ENCODE measurements at regions of chr19 and their contacts with region 1.

Region 1: DNA sequence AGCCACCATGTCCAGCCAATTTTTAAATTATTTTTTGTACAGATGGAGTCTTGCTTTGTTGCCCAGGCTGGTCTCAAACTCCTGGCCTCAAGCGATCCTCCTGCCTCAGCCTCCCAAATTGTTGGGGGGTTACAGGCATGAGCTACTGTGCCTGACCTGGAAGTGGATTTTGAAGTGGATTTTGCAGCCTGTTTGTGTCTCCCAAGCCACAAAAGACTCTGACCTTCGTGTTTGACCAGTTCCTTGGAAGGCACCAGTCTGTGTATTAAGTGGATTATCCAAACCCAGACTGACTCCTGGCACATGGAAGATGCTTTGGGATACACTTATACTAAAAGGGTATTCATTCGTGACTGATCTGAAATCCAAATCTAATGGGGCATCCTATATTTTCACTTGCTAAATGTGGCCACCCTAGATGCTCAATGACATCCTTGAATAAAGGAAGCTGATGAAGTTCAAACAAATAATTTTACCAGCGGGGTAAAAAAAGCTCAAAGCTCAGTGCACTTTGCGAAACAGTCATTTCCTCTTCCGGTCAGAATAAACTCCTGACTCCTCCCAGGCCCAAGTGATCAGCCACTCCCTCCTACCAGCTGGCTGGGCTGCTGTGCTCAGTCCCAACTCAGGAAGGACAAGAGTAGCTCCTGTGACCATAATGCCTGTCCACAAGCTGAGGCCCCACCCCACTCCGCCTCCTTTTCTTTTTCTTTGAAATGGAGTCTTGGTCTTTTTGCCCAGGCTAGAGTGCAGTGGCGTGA is 32.6 kb upstream of the GATAD2A start:
- DNase-seq: peak; percentile 79
- ATAC-seq: peak; percentile 99
- H3K4me3 Mint-ChIP-seq: peak overlapping the region; percentile 23
- H3K27ac Mint-ChIP-seq: peak overlapping the region; percentile 94
- H3K4me1 Mint-ChIP-seq: peaks cover 11% of the 10 kb centered on the region
- H3K27me3 Mint-ChIP-seq: no peaks in the 10 kb centered on the region

Region 2: DNA sequence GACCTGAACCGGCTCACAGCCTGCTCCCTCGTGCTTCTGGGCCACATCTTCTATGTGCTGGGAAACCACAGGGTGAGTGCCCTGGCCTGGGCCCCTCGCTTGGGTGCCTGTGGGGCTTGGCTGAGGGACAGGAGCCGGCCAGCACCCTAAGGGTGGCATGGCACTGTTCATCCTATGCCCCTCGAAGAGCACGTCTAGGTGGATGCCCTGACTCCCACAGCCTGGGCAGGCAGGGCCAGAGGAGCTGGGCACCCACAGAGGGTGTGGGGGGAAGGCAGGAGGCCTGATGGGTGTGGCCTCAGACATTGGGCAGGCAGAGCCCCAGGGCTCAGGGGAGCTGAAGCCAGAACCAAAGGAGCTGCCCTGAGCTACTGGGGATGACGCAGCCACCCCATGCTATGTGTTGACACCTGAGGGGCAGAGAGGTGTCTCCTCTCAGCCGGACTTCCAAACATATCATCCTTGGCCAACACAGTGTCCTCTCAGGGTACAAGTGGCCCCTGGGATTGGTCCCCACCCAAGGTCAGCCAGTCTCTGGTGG is 23.4 kb before region 1 on chr19:
- CTCF ChIA-PET with region 1: no interaction called
- DNase-seq: no peak
- ATAC-seq: no peak
- H3K4me3 Mint-ChIP-seq: no peak overlapping the region
- H3K27ac Mint-ChIP-seq: no peak overlapping the region
- H3K4me1 Mint-ChIP-seq: no peaks in the 10 kb centered on the region
- H3K27me3 Mint-ChIP-seq: no peaks in the 10 kb centered on the region

Region 3: DNA sequence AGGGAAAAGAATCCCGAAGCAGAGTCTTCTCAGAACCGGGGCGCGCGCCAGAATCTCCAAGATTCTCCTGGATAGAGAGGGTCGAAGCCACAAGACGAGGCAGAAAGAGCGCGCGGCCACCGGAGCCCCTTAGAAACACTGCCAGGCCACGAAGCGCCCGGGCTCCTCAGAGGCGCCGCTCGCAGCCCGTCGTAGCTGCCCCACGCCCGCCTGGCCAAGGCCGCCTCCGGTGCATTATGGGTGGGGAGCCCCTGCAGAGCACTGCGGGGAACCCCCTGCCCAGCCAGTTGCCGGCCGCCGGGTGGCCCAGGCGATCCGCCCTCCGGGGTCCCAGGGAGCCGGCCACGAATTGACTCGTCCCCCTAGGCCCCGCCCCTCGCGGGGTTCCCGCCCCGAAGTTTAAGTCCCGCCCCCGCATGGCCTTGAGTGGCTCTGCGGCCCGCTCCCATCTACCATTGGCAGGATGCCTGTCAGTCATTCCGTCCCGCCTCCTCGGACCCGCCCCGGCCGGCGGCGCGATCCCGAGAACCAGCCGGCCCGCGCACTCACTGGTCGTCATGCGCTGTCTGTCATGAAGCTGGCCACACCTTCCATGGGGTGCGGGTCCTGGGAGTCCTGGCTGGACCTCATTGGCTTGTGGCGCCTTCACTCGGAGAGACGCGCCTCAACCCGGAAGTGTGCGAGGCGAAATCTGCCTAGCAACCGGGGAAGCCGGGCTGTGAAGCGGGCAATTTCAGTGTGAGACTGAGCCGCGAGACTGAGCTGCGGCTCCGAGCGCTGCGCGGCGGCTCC is 12.5 kb after region 1 on chr19:
- CTCF ChIA-PET with region 1: interaction called, 11 read pairs
- DNase-seq: peak; percentile 100
- ATAC-seq: peak; percentile 95
- H3K4me3 Mint-ChIP-seq: peak overlapping the region; percentile 77
- H3K27ac Mint-ChIP-seq: peak overlapping the region; percentile 91
- H3K4me1 Mint-ChIP-seq: peaks cover 42% of the 10 kb centered on the region
- H3K27me3 Mint-ChIP-seq: no peaks in the 10 kb centered on the region

Measured in activated CD8-positive, alpha-beta memory T cell treated with anti-CD3 and anti-CD28 coated beads, Interleukin-2, amount 10 ng/mL, durations not matched to agents 7 days and 5 days (primary cell).